ENCODE measurements at regions of chr4 and their contacts with region 1.

Region 1: DNA sequence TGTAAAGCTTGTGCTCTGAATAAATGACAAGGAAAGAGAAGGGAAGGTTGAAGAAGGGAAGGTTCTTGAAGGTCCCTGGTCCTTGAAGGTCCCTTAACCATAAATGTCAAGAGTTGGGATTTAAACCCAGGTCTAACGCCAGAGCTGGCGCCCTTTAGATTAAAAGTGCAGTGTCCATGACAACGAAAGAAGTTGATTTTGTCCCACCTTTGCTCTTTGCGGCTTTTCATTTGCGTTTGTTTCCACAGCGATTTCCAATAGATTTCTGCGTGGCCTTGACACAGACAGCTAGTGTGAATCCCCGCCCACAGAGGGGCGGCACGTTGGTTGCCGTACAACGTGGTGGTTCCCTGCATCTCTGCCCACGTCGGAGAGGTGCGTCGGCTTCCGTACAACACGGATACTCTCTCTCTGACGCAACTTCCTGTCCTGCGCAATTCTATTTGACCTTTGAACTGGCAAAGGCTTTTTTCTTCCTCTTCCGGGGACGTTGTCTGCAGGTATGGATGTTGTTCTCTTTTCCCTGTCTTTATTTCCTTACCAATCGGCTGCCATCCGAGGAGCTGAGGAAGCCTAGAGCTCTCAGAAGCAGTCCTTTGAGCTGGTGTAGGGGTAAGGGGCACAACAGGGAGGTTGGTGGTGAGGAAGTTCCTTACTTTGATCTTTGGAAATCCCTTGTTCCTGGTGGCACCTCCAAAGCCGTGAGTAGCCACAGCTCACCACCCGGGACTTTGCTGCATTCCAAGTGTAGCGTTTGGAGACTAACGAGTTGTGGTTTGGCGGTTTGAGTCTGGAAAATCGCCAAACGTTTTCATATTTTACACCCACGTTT is at the start of gene RPL34:
- DNase-seq: peak; percentile 99
- H3K4me3 Mint-ChIP-seq: peak within 1 kb of the TSS; percentile 93
- H3K27ac Mint-ChIP-seq: peak within 1 kb of the TSS; percentile 95
- H3K4me1 Mint-ChIP-seq: peaks cover 45% of the 10 kb centered on the region
- H3K27me3 Mint-ChIP-seq: no peaks in the 10 kb centered on the region
- total RNA-seq, gene RPL34: 1,983 to 2,004 TPM

Region 2: GRCh38 chr4:107930821-107931774 is 689.2 kb before region 1 on chr4 and contains the start of gene CYP2U1:
- CTCF ChIA-PET with region 1: no interaction called
- intact Hi-C with region 1: loop called (anchors 1 kb)
- DNase-seq: peak; percentile 78
- H3K4me3 Mint-ChIP-seq: peak within 1 kb of the TSS; percentile 83
- H3K27ac Mint-ChIP-seq: no peak within 1 kb of the TSS
- H3K4me1 Mint-ChIP-seq: peaks cover 15% of the 10 kb centered on the region
- H3K27me3 Mint-ChIP-seq: no peaks in the 10 kb centered on the region
- total RNA-seq, gene CYP2U1: 1.5 to 1.8 TPM

Region 3: DNA sequence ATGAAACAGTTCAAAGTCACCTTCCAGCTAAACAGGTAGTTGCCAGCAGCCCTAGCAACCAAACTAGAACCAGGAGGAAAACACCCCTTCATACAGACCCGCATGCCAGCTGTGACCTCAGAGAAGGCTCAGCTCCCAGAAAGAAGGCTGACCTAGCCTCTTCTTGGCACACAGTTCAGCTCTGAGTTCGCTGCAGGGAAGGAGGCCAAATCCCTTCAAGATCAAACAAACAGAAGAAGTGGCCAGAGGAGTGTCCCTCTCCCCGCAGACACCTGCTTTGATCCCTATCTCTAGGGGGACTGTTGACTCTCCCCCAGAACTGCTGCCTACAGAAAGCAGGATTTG is 574.7 kb before region 1 on chr4:
- CTCF ChIA-PET with region 1: no interaction called
- intact Hi-C with region 1: loop called (anchors 5 kb)
- DNase-seq: peak; percentile 67
- H3K4me3 Mint-ChIP-seq: no peak overlapping the region
- H3K27ac Mint-ChIP-seq: peak overlapping the region; percentile 89
- H3K4me1 Mint-ChIP-seq: peaks cover 68% of the 10 kb centered on the region
- H3K27me3 Mint-ChIP-seq: no peaks in the 10 kb centered on the region

Region 4: GRCh38 chr4:108155373-108155772 is 464.9 kb before region 1 on chr4:
- CTCF ChIA-PET with region 1: no interaction called
- intact Hi-C with region 1: loop called (anchors 5 kb)
- DNase-seq: peak; percentile 76
- H3K4me3 Mint-ChIP-seq: peak overlapping the region; percentile 75
- H3K27ac Mint-ChIP-seq: peak overlapping the region; percentile 97
- H3K4me1 Mint-ChIP-seq: peaks cover 77% of the 10 kb centered on the region
- H3K27me3 Mint-ChIP-seq: no peaks in the 10 kb centered on the region

Region 5: DNA sequence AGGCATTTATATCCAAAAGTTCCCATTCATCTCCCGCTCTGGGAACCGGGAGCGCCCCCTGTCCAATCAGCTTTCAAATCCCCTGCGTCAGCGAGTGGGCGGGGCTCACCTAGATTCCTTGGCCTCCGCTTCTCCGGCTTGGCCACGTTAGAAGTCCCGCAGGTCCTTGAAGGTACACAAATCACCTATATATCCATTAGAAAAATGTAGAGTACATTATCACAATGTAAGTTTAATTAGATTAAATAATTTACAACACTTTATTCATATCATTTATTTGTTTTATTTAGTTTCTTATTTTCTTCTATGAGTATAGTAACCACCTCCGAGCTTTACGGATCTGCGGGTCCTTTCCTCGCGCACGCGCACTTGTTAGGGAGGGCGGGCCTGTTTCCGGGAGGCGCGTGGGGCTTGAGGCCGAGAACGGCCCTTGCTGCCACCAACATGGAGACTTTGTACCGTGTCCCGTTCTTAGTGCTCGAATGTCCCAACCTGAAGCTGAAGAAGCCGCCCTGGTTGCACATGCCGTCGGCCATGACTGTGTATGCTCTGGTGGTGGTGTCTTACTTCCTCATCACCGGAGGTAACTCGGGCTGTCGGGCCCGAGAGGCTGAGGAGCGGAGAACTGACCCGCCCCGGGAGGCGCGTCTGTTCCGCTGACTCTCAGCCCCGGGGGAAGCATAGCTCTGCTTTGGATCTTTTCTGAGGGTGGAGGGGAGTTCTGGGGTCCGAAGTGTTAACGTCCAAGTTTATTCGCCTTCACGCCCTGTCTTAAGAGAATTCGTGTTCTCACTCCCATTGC is 30.1 kb after region 1 on chr4 and contains the start of gene OSTC:
- CTCF ChIA-PET with region 1: no interaction called
- intact Hi-C with region 1: loop called (anchors 1 kb)
- DNase-seq: peak; percentile 95
- H3K4me3 Mint-ChIP-seq: peak within 1 kb of the TSS; percentile 95
- H3K27ac Mint-ChIP-seq: peak within 1 kb of the TSS; percentile 91
- H3K4me1 Mint-ChIP-seq: peaks cover 30% of the 10 kb centered on the region
- H3K27me3 Mint-ChIP-seq: no peaks in the 10 kb centered on the region
- total RNA-seq, gene OSTC: 72.5 to 73.3 TPM